ENCODE measurements at regions of chr17 and their contacts with region 1.

Region 1: DNA sequence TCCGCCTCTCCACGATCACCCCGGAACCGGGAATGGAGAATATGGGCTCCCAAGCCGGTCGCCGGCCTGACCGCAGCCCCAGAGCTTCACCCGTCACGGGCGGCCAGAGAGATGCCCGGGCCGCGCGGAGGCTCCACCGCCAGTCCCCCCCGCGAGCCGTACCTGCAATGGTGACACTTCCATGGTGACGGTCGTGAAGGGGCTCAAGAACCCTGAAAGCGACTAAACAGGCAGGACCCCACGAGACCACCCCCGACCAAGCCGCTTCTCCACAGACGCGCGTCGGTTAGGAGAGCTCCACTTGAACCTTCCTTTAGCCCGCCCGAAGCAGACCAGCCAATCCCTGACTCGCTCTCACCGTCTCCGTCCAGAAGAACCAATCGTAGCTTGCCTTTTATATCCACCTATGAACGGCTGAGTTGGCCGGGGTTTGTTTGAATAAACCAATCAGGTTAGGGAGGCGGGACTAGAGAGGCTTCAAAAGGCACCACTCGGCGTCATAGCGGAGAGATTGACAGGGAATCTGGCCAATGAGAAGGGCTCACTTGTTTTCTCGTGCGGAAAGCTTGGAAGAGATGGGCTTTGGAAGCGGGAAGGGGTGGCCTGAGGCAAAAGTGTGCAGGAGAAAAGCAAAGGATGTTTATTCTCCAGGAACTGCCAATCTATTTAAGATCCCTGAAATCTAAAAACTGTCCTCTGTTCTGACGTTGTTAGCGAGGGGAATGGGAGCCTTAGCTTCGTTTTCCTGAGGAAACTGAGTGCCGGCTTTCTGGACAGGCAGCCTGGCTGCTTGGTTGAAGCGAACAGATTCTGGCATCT is at the start of gene TOP2A:
- DNase-seq: peak; percentile 97 to 99
- ATAC-seq: peak; percentile 99 to 100 (median 99)
- H3K4me3 ChIP-seq: peak within 1 kb of the TSS; percentile 71
- H3K4me3 Mint-ChIP-seq: peak within 1 kb of the TSS; percentile 96
- H3K27ac ChIP-seq: peak within 1 kb of the TSS; percentile 18
- H3K27ac Mint-ChIP-seq: peak within 1 kb of the TSS; percentile 75 to 78
- H3K4me1 ChIP-seq: peaks cover 16% of the 10 kb centered on the region
- H3K4me1 Mint-ChIP-seq: peaks cover 10 to 14% of the 10 kb centered on the region in 2 donors
- H3K27me3 ChIP-seq: no peaks in the 10 kb centered on the region
- H3K27me3 Mint-ChIP-seq: no peaks in the 10 kb centered on the region
- CTCF ChIP-seq: no peak
- total RNA-seq, gene TOP2A: 2.0 to 6.4 (median 4.6) TPM

Region 2: GRCh38 chr17:40303009-40303657 is 114.7 kb before region 1 on chr17:
- intact Hi-C with region 1: loop called (anchors 1 kb)
- DNase-seq: peak in 1 of 2 donors; percentile 84
- ATAC-seq: peak; percentile 78 to 86 (median 84)
- H3K4me3 ChIP-seq: no peak overlapping the region
- H3K4me3 Mint-ChIP-seq: no peak overlapping the region
- H3K27ac ChIP-seq: no peak overlapping the region
- H3K27ac Mint-ChIP-seq: peak overlapping the region in 1 of 2 donors; percentile 39
- H3K4me1 ChIP-seq: peaks cover 18% of the 10 kb centered on the region
- H3K4me1 Mint-ChIP-seq: peaks cover 6 to 7% of the 10 kb centered on the region in 2 donors
- H3K27me3 ChIP-seq: no peaks in the 10 kb centered on the region
- H3K27me3 Mint-ChIP-seq: no peaks in the 10 kb centered on the region
- CTCF ChIP-seq: peak; percentile 81

Region 3: GRCh38 chr17:40542558-40543411 is 125.0 kb after region 1 on chr17:
- intact Hi-C with region 1: no loop called
- DNase-seq: peak in 1 of 2 donors; percentile 73
- ATAC-seq: peak in 1 of 3 donors; percentile 24
- H3K4me3 ChIP-seq: no peak overlapping the region
- H3K4me3 Mint-ChIP-seq: peak overlapping the region; percentile 35
- H3K27ac ChIP-seq: peak overlapping the region; percentile 65
- H3K27ac Mint-ChIP-seq: peak overlapping the region; percentile 64 to 87
- H3K4me1 ChIP-seq: peaks cover 77% of the 10 kb centered on the region
- H3K4me1 Mint-ChIP-seq: peaks cover 43 to 49% of the 10 kb centered on the region in 2 donors
- H3K27me3 ChIP-seq: peaks cover 7% of the 10 kb centered on the region
- H3K27me3 Mint-ChIP-seq: peaks cover 0 to 13% of the 10 kb centered on the region in 2 donors
- CTCF ChIP-seq: no peak